ENCODE measurements at regions of chr10 and their contacts with region 1.

Region 1: GRCh38 chr10:60114765-60115586 is 208.6 kb upstream of the CCDC6 start:
- DNase-seq: peak in 1 of 2 experiments; percentile 17
- H3K4me3 ChIP-seq: no peak overlapping the region
- H3K27ac ChIP-seq: no peak overlapping the region
- H3K4me1 ChIP-seq: no peaks in the 10 kb centered on the region
- H3K27me3 ChIP-seq: no peaks in the 10 kb centered on the region
- CTCF ChIP-seq: peak in 2 of 3 experiments; percentile 60 to 65; a peak in 2 of 4 replicates
- EP300 ChIP-seq: no peak
- POLR2A ChIP-seq: no peak
- RAD21 ChIP-seq: peak; percentile 73 to 77

Region 2: GRCh38 chr10:60099998-60100747 is 14.8 kb before region 1 on chr10:
- CTCF ChIA-PET with region 1: interaction called, 82 read pairs
- POLR2A ChIA-PET with region 1: interaction called, 3 read pairs
- DNase-seq: no peak
- H3K4me3 ChIP-seq: no peak overlapping the region
- H3K27ac ChIP-seq: no peak overlapping the region
- H3K4me1 ChIP-seq: peaks cover 0 to 5% (median 1%) of the 10 kb centered on the region in 4 experiments; a peak in 1 of 7 replicates
- H3K27me3 ChIP-seq: no peaks in the 10 kb centered on the region; a peak in 1 of 7 replicates
- CTCF ChIP-seq: peak in 2 of 3 experiments; percentile 52 to 56; a peak in 2 of 4 replicates
- EP300 ChIP-seq: no peak
- POLR2A ChIP-seq: no peak
- RAD21 ChIP-seq: peak; percentile 69 to 70

Region 3: DNA sequence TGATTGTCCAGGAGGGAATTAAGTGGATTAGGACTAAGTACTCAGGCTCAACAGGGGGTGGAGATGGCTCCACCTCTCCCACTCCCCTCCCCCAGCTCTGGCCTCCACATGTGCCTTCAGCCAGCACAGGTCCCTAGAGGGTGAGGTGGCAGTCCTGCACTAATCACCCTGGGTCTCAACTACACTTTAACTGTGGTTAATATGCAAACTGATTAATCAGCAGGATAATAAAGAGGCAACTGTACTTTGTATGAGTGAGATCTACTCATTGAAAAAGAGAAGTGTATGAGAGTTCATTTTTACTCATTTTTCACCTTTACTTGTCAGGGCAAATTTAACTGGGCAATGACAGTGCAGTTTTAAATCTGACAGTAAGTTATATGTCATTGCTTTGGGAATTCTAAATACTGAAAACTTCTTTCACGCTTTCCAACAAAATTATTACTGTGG is 15.2 kb after region 1 on chr10:
- CTCF ChIA-PET with region 1: interaction called, 18 read pairs
- POLR2A ChIA-PET with region 1: interaction called, 4 read pairs
- DNase-seq: no peak
- H3K4me3 ChIP-seq: no peak overlapping the region
- H3K27ac ChIP-seq: no peak overlapping the region
- H3K4me1 ChIP-seq: peaks cover 0 to 5% (median 0%) of the 10 kb centered on the region in 4 experiments; a peak in 2 of 7 replicates
- H3K27me3 ChIP-seq: no peaks in the 10 kb centered on the region
- CTCF ChIP-seq: no peak
- EP300 ChIP-seq: no peak
- POLR2A ChIP-seq: no peak
- RAD21 ChIP-seq: no peak

Region 4: GRCh38 chr10:60140651-60141632 is 26.0 kb after region 1 on chr10:
- CTCF ChIA-PET with region 1: interaction called, 12 read pairs
- POLR2A ChIA-PET with region 1: interaction called, 8 read pairs
- DNase-seq: peak in 1 of 2 experiments; percentile 60
- H3K4me3 ChIP-seq: peak overlapping the region; percentile 52 to 82 (median 68)
- H3K27ac ChIP-seq: peak overlapping the region; percentile 81
- H3K4me1 ChIP-seq: peaks cover 0 to 10% (median 4%) of the 10 kb centered on the region in 4 experiments; a peak in 2 of 7 replicates
- H3K27me3 ChIP-seq: no peaks in the 10 kb centered on the region
- CTCF ChIP-seq: no peak
- EP300 ChIP-seq: no peak
- POLR2A ChIP-seq: peak in 1 of 2 experiments; percentile 51; a peak in 1 of 3 replicates
- RAD21 ChIP-seq: no peak

Region 5: GRCh38 chr10:60200012-60200681 is 85.2 kb after region 1 on chr10:
- CTCF ChIA-PET with region 1: interaction called, 151 read pairs
- POLR2A ChIA-PET with region 1: no interaction called
- DNase-seq: no peak
- H3K4me3 ChIP-seq: no peak overlapping the region
- H3K27ac ChIP-seq: no peak overlapping the region
- H3K4me1 ChIP-seq: no peaks in the 10 kb centered on the region
- H3K27me3 ChIP-seq: no peaks in the 10 kb centered on the region
- CTCF ChIP-seq: no peak
- EP300 ChIP-seq: no peak
- POLR2A ChIP-seq: no peak
- RAD21 ChIP-seq: no peak

Measured in H1 (cell line).